ENCODE measurements at regions of chrX and their contacts with region 1.

Region 1: DNA sequence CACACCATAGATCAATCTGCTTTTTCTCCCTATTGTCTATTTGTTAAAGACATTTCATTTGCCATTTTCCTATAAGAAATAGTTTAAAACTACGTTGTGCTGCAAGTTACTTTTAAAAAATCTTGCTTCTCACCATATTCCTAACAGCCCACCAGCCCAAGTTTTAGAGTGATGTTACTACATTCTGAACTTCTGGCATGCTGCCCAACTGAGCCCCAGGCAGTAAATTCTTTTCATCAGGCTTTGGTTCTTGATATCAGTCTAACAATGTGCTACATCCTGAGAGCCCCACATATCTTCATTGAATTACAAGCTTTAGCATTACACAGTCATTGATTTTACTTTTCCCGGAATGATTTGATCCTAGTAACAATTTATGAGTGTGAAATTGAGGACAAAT is 283.8 kb upstream of the IL1RAPL1 start:
- DNase-seq: no peak
- ATAC-seq: no peak
- H3K4me3 ChIP-seq: no peak overlapping the region
- H3K27ac ChIP-seq: no peak overlapping the region
- H3K4me1 ChIP-seq: no peaks in the 10 kb centered on the region
- H3K27me3 ChIP-seq: no peaks in the 10 kb centered on the region
- CTCF ChIP-seq: no peak

Region 2: DNA sequence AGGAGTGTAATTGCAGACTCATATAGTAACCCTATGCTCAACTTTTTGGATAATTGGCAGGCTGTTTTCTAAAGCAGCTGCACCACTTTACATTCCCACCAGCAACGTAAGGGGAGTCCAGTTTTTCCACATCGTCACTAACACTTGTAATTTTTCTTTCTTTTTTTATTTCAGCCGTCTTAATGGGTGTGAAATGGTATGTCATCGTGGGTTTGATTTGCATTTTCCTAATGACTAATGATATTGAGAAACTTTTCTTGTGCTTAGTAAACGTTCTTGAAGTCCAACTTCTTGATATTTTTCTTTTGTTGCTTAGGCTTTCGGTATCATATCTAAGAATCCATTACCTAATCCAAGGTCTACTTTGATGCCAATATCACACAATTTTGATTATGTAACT is 188.5 kb after region 1 on chrX:
- CTCF ChIA-PET with region 1: no interaction called
- POLR2A ChIA-PET with region 1: no interaction called
- intact Hi-C with region 1: loop called (anchors 5 kb)
- DNase-seq: no peak
- ATAC-seq: no peak
- H3K4me3 ChIP-seq: no peak overlapping the region
- H3K27ac ChIP-seq: no peak overlapping the region
- H3K4me1 ChIP-seq: peaks cover 14% of the 10 kb centered on the region
- H3K27me3 ChIP-seq: no peaks in the 10 kb centered on the region
- CTCF ChIP-seq: no peak

Measured in PC-3 (cell line).